Activated CD4-positive, alpha-beta memory T cell treated with anti-CD3 and anti-CD28 coated beads, Interleukin-2, amount 10 ng/mL, durations not matched to agents 7 days and 5 days (primary cell): ENCODE measurements at regions of chr18 and their contacts with region 1.

Region 1: GRCh38 chr18:50356036-50356945 is 18.6 kb upstream of the SKA1 start:
- DNase-seq: peak; percentile 33
- H3K4me3 Mint-ChIP-seq: no peak overlapping the region
- H3K27ac Mint-ChIP-seq: peak overlapping the region; percentile 38
- H3K4me1 Mint-ChIP-seq: peaks cover 19% of the 10 kb centered on the region
- H3K27me3 Mint-ChIP-seq: peaks cover 27% of the 10 kb centered on the region

Region 2: GRCh38 chr18:50009773-50010335 is 346.4 kb before region 1 on chr18:
- CTCF ChIA-PET with region 1: interaction called, 15 read pairs
- POLR2A ChIA-PET with region 1: no interaction called
- DNase-seq: peak; percentile 58
- H3K4me3 Mint-ChIP-seq: no peak overlapping the region
- H3K27ac Mint-ChIP-seq: no peak overlapping the region
- H3K4me1 Mint-ChIP-seq: peaks cover 3% of the 10 kb centered on the region
- H3K27me3 Mint-ChIP-seq: peaks cover 18% of the 10 kb centered on the region

Region 3: DNA sequence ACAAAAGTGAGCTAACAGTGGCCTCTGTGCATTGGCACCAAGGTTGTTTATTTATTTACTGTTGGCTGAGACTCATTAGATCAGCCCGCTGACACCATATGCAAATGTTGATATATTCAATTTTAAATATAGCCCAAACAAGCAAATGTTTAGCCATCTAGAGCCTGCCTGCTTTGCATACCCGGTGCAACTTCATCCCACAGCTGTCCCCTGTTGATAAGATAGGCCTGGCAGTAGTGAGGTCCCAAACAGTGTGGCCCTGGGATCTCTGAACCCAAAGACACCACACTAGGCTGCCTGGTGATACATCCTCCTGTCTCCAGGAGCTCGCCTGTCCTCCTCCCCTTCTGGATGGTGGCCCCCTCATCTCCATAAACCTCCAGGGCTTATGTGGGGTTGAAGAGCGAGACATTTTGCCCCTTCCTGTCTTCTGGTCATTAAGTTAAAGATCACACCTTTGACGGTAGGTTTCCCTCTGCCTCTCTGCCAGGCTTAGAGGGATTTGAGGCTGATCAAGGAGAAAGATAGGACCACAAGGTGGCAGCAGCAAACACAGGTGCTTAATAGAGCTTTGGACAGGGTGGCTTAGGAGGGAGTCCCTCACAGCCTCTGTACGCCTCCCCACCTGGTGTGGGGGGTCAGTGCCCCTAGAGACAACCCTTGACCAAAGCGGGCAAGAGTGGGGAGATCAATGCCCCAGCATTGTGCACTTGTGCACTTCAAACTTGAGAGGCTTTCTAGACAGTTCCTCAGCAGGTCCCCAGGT is 137.7 kb before region 1 on chr18:
- CTCF ChIA-PET with region 1: interaction called, 118 read pairs
- POLR2A ChIA-PET with region 1: interaction called, 10 read pairs
- DNase-seq: peak; percentile 46
- H3K4me3 Mint-ChIP-seq: no peak overlapping the region
- H3K27ac Mint-ChIP-seq: no peak overlapping the region
- H3K4me1 Mint-ChIP-seq: no peaks in the 10 kb centered on the region
- H3K27me3 Mint-ChIP-seq: peaks cover 39% of the 10 kb centered on the region

Region 4: DNA sequence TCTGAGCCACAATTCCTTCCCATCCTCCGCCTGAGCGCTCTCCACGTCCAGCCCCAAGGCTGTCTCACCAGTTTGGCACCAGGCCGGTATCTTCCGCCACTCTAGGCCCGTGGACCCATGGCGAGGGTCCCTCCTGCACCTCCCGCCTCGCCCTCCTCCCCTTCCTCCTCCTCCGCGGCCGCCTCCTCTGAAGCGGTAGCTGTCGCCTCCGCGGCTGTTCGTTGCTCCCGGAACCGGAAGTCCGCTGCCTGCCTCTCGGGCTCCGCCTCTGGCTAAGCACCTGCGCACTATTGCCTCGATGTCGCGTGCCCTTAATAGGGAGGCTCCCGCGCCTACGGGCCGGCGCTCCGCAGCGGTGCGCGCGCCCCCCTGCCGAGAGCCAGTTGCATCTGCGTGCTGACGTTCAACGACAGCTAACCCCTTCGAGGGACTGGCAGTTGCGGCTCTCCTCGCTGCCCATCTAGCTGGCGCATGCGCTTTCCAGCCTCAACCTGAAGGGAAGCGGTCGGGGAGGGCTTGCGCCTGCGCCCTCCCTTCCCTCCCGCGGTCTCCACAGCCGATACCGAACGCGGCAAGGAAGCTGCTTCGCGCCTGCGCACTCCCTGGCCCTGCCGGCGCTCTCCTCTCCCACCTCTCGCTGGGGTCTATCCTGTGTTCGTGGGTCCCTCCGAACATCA is 74.9 kb before region 1 on chr18 and contains the start of gene MBD1:
- CTCF ChIA-PET with region 1: interaction called, 29 read pairs
- POLR2A ChIA-PET with region 1: interaction called, 14 read pairs
- DNase-seq: peak; percentile 96
- H3K4me3 Mint-ChIP-seq: peak within 1 kb of the TSS; percentile 88
- H3K27ac Mint-ChIP-seq: peak within 1 kb of the TSS; percentile 89
- H3K4me1 Mint-ChIP-seq: peaks cover 74% of the 10 kb centered on the region
- H3K27me3 Mint-ChIP-seq: no peaks in the 10 kb centered on the region
- total RNA-seq, gene MBD1: 103 to 106 TPM

Region 5: GRCh38 chr18:50307738-50308470 is 48.4 kb before region 1 on chr18:
- CTCF ChIA-PET with region 1: interaction called, 13 read pairs
- POLR2A ChIA-PET with region 1: no interaction called
- DNase-seq: peak; percentile 94
- H3K4me3 Mint-ChIP-seq: peak overlapping the region; percentile 86
- H3K27ac Mint-ChIP-seq: peak overlapping the region; percentile 85
- H3K4me1 Mint-ChIP-seq: peaks cover 25% of the 10 kb centered on the region
- H3K27me3 Mint-ChIP-seq: peaks cover 40% of the 10 kb centered on the region

Region 6: DNA sequence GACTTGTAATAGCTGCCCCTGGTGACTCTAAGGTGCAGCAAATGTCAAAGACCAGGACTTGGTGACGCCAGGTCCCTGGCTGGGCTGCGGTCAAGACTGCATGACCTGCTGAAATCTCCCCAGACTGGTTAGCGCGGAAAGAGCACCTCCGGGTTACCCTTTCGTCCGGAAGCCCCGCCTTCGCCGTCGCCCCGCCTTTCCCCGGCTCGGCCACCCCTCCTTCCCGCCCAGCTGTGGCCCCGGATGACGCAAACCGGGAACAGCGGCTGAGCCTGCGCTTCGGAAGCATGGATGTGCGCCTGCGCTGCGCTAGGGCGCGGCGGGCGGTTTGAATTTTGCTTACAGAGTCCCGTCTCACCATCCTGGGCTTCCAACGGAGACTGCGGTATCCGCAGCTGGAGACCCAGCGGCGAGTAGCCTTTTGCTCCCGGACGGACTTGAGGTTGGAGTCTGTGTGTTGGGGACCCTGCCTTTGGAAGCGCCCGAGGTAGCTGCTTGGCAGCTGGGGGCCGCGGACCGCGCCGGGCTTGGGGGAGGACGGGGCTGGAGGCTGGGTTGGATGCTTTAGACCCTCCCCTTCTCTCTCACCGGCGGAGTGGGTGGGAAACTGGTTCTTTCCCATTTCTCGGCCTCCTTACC is 18.6 kb after region 1 on chr18 and contains the start of gene SKA1:
- CTCF ChIA-PET with region 1: interaction called, 25 read pairs
- POLR2A ChIA-PET with region 1: interaction called, 8 read pairs
- DNase-seq: peak; percentile 94
- H3K4me3 Mint-ChIP-seq: peak within 1 kb of the TSS; percentile 89
- H3K27ac Mint-ChIP-seq: peak within 1 kb of the TSS; percentile 85
- H3K4me1 Mint-ChIP-seq: peaks cover 34% of the 10 kb centered on the region
- H3K27me3 Mint-ChIP-seq: peaks cover 14% of the 10 kb centered on the region
- total RNA-seq, gene SKA1: 44.6 to 45.6 TPM